Activated CD4-positive, alpha-beta T cell treated with anti-CD3 and anti-CD28 coated beads for 36 hours (primary cell): ENCODE measurements at regions of chr22 and their contacts with region 1.

Region 1: GRCh38 chr22:36252754-36253517 is at the start of gene APOL1:
- DNase-seq: peak; percentile 71
- ATAC-seq: peak; percentile 87
- H3K4me3 Mint-ChIP-seq: peak within 1 kb of the TSS; percentile 92
- H3K27ac Mint-ChIP-seq: peak within 1 kb of the TSS; percentile 91
- H3K4me1 Mint-ChIP-seq: peaks cover 56% of the 10 kb centered on the region
- H3K27me3 Mint-ChIP-seq: no peaks in the 10 kb centered on the region
- total RNA-seq, gene APOL1: 32.0 to 37.2 TPM

Region 2: DNA sequence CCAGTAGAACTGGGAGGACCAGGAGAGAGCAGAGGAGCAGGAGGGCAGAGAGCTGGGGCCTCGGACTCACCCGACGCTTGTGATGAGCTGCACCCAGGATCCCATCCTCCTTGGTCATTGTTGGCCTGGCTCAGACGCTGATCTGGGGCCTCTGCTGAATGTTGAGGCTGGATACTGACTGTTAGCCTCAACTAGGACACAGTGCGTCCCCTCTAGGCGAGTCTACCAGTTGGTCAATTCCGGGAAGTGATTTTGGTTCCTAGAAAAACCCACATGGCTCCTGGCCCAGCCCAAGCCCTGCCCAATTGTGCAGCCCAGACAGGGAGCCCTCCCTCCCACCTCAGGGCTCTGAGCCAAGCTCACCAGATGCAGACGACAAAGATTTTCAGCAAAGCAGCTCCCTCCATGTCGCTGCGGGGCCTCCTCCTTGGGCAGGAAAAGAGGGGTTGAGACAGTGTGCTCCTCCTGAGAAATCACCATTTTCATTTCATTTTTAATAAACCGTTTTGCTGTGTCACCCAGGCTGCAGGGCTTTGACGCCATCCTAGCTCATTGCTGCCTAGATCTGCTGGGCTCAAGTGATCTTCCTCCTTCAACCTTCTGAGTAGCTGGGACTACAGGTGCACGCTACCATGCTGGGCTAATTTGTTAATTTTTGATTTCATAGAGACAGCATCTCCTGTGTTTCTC is 51.2 kb before region 1 on chr22 and contains the start of gene APOL4:
- CTCF ChIA-PET with region 1: interaction called, 3 read pairs
- POLR2A ChIA-PET with region 1: no interaction called
- intact Hi-C with region 1: loop called in 1 of 2 experiments (anchors 1 kb)
- DNase-seq: no peak
- ATAC-seq: no peak
- H3K4me3 Mint-ChIP-seq: no peak within 1 kb of the TSS
- H3K27ac Mint-ChIP-seq: no peak within 1 kb of the TSS
- H3K4me1 Mint-ChIP-seq: peaks cover 13% of the 10 kb centered on the region
- H3K27me3 Mint-ChIP-seq: peaks cover 3% of the 10 kb centered on the region
- total RNA-seq, gene APOL4: 0.16 to 0.21 TPM

Region 3: GRCh38 chr22:36277482-36278291 is 24.8 kb after region 1 on chr22:
- CTCF ChIA-PET with region 1: interaction called, 10 read pairs
- POLR2A ChIA-PET with region 1: no interaction called
- intact Hi-C with region 1: no loop called
- DNase-seq: peak; percentile 88
- ATAC-seq: peak; percentile 82
- H3K4me3 Mint-ChIP-seq: no peak overlapping the region
- H3K27ac Mint-ChIP-seq: peak overlapping the region; percentile 49
- H3K4me1 Mint-ChIP-seq: peaks cover 34% of the 10 kb centered on the region
- H3K27me3 Mint-ChIP-seq: no peaks in the 10 kb centered on the region